ENCODE measurements at regions of chr12 and their contacts with region 1.

Region 1: GRCh38 chr12:22083167-22083566 is 37.1 kb downstream of the CMAS start:
- DNase-seq: no peak
- H3K4me3 ChIP-seq: no peak overlapping the region
- H3K27ac ChIP-seq: no peak overlapping the region
- H3K27me3 ChIP-seq: peaks cover 8% of the 10 kb centered on the region
- CTCF ChIP-seq: peak; percentile 41

Region 2: DNA sequence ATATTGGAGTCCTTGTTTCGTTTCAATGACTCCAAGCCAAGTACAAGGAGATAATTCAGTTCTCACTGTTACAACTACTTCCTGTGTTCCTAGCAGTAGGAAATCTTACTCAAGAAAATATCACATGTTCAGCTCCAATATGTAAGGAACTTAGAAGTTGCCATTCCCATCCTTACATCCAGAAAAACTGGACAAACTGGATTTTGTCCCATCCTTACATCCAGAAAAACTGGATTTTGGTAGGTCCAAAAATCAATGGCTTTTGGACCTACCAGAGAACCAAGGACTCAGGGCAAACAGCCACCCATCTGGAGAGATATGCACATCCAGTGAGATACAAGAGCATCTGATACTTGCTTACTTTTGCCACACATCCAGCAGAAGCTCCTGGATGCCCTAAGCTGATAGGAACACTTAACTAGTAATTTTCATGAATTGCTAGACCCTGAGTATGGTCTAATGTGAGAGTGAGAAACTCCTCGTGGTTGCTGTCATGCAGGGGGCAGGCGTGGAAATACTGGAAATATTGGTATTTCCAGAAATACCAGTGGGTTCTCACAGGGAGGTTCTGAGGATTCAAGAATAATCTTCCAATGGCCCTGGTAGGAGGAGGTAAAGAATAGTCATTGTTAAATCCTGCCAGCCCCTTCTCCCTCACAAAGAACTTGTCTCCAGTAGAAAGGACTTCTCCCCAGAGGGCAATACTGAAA is 13.2 kb before region 1 on chr12:
- CTCF ChIA-PET with region 1: interaction called, 15 read pairs
- POLR2A ChIA-PET with region 1: no interaction called
- DNase-seq: no peak
- H3K4me3 ChIP-seq: no peak overlapping the region
- H3K27ac ChIP-seq: no peak overlapping the region
- H3K27me3 ChIP-seq: peaks cover 3% of the 10 kb centered on the region
- CTCF ChIP-seq: no peak

Region 3: GRCh38 chr12:22190969-22191368 is 107.8 kb after region 1 on chr12:
- CTCF ChIA-PET with region 1: no interaction called
- POLR2A ChIA-PET with region 1: no interaction called
- DNase-seq: no peak
- H3K4me3 ChIP-seq: no peak overlapping the region
- H3K27ac ChIP-seq: no peak overlapping the region
- H3K27me3 ChIP-seq: no peaks in the 10 kb centered on the region
- CTCF ChIP-seq: no peak

Region 4: DNA sequence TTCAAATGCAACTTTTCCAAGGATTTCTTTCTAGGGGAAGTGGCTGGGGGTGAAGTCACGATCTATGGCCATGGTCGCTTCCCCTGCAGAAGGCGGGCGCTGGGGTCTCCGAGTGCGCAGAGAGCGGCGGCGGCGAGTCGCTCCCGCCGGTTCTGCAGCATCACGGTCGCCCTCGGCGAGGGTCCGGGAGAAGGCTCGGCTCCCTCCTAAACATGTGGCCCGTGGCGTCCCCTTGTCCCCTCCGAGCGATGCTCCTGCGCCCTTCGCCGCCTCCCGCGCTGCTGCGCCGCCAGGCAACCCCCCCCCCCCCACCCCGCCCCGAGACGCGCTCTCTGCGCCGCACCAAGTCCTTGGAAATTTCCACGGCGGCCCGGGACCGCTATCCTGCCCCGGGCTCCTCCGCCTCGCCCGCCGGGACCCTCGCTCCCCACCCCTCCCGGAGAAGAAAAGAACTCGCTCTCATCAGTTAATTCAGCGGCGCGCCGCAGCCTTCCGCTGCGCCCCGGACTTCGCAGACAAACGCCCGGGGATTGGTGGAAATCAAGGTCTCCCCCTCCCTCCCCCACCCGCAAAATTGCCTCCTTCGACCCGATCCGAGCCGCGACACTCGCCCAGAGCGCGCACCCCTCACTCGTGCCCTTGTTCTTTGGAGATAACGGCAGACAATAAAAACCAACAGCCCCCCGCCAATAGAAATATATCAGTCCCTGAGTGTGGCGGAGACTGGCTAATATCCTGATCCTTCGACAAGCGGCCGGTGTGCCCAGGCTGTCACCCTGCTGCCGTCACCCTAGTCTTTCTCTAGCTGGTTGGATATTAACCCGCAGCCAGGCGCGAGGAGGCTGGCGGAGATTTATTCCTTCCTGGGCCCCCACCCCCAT is 251.5 kb after region 1 on chr12 and contains the start of gene ST8SIA1:
- CTCF ChIA-PET with region 1: interaction called, 13 read pairs
- POLR2A ChIA-PET with region 1: interaction called, 3 read pairs
- DNase-seq: no peak
- H3K4me3 ChIP-seq: peak within 1 kb of the TSS; percentile 66
- H3K27ac ChIP-seq: no peak within 1 kb of the TSS
- H3K27me3 ChIP-seq: peaks cover 36% of the 10 kb centered on the region
- CTCF ChIP-seq: no peak
- polyA plus RNA-seq, gene ST8SIA1: 0.04 and 0.26 TPM in 2 replicates

Region 5: GRCh38 chr12:22443379-22444316 is 360.5 kb after region 1 on chr12:
- CTCF ChIA-PET with region 1: interaction called, 47 read pairs
- POLR2A ChIA-PET with region 1: no interaction called
- DNase-seq: peak; percentile 36
- H3K4me3 ChIP-seq: no peak overlapping the region
- H3K27ac ChIP-seq: no peak overlapping the region
- H3K27me3 ChIP-seq: peaks cover 5% of the 10 kb centered on the region
- CTCF ChIP-seq: peak; percentile 82

Region 6: GRCh38 chr12:22624870-22625761 is 541.9 kb after region 1 on chr12 and contains the start of gene ETNK1:
- CTCF ChIA-PET with region 1: no interaction called
- POLR2A ChIA-PET with region 1: interaction called, 11 read pairs
- DNase-seq: peak; percentile 70
- H3K4me3 ChIP-seq: peak within 1 kb of the TSS; percentile 92
- H3K27ac ChIP-seq: peak within 1 kb of the TSS; percentile 90
- H3K27me3 ChIP-seq: no peaks in the 10 kb centered on the region
- CTCF ChIP-seq: no peak
- polyA plus RNA-seq, gene ETNK1: 17.2 and 22.8 TPM in 2 replicates

Region 7: GRCh38 chr12:22653075-22653474 is 569.9 kb after region 1 on chr12:
- CTCF ChIA-PET with region 1: interaction called, 14 read pairs
- POLR2A ChIA-PET with region 1: no interaction called
- DNase-seq: no peak
- H3K4me3 ChIP-seq: no peak overlapping the region
- H3K27ac ChIP-seq: no peak overlapping the region
- H3K27me3 ChIP-seq: no peaks in the 10 kb centered on the region
- CTCF ChIP-seq: no peak